Heart left ventricle (tissue), 16 donors: ENCODE measurements at regions of chr6 and their contacts with region 1.

Region 1: DNA sequence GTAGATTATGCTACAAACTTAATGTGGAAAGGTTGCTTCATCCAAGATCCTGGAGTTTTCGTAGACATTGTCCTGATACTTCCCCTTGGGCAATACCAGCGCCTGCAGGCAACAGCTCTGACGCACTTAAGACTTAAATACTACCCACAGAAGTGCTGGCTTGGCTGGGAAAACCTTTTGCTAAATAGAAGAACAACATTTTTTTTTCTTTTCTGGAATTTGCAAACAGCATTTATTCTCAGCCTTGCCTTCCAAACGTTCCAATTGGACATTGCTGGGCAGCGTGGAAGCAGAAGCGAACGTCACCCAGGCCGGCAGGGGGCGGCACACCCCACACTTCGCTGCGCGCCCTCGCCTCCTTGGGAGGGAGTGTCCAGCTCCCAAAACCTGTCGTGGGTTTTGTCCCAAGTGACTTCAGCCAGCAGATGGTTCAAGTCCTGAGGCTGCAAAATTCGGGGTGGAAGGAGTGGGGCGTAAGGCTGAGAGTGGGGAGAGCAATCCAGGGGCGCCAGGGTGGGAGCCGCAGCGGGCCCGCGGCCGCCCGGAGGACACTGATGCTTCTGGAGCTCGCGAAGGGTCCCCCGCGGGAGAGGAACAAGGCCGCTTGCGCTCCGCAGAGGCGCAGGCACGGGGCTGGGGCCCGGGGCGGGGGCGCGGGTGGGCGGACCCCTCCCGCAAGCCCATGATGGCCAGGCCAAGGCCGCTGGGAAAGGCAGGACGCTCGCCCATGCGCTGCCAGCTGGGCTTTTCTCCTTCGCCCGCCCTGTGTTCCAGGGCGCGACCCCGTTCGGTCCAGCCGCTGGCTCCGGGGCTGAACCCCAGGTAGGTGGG is 60.8 kb upstream of the MAP3K4 start:
- DNase-seq: peak; percentile 72 to 88 (median 78)
- ATAC-seq: peak; percentile 85 to 98 (median 93)
- H3K4me3 ChIP-seq: peak overlapping the region; percentile 25 to 70 (median 52)
- H3K27ac ChIP-seq: peak overlapping the region in 1 of 12 donors; percentile 22
- H3K4me1 ChIP-seq: peaks cover 0 to 9% (median 0%) of the 10 kb centered on the region in 12 donors
- H3K27me3 ChIP-seq: peaks cover 0 to 22% (median 0%) of the 10 kb centered on the region in 9 donors
- CTCF ChIP-seq: peak; percentile 82 to 95 (median 90)
- POLR2A ChIP-seq: no peak

Region 2: DNA sequence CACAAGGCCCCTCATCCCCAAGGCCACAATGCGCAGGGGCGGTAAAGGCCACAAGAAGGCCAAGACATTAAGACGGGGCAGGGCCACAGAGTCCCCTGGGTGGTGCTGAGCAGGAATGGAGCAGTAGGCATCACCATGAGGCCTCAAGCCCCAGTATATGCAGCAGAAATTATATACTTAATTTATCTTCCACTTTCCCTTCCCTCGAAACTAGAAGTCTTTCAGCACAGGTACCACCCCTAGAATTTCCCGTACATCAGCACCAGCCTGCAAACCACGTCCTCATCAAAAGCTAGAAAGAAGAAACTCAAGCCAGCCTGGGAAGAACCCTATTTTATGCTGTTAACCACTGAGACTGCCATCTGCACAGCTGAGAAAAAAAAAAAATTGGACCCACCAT is 139.3 kb before region 1 on chr6:
- intact Hi-C with region 1: no loop called
- DNase-seq: no peak
- ATAC-seq: no peak
- H3K4me3 ChIP-seq: no peak overlapping the region
- H3K27ac ChIP-seq: no peak overlapping the region
- H3K4me1 ChIP-seq: no peaks in the 10 kb centered on the region
- H3K27me3 ChIP-seq: no peaks in the 10 kb centered on the region
- CTCF ChIP-seq: no peak
- POLR2A ChIP-seq: no peak

Region 3: GRCh38 chr6:160945516-160946177 is 14.9 kb after region 1 on chr6:
- intact Hi-C with region 1: no loop called
- DNase-seq: no peak
- ATAC-seq: no peak
- H3K4me3 ChIP-seq: no peak overlapping the region
- H3K27ac ChIP-seq: no peak overlapping the region
- H3K4me1 ChIP-seq: peaks cover 0 to 18% (median 6%) of the 10 kb centered on the region in 12 donors
- H3K27me3 ChIP-seq: peaks cover 0 to 3% (median 0%) of the 10 kb centered on the region in 9 donors
- CTCF ChIP-seq: no peak
- POLR2A ChIP-seq: no peak

Region 4: DNA sequence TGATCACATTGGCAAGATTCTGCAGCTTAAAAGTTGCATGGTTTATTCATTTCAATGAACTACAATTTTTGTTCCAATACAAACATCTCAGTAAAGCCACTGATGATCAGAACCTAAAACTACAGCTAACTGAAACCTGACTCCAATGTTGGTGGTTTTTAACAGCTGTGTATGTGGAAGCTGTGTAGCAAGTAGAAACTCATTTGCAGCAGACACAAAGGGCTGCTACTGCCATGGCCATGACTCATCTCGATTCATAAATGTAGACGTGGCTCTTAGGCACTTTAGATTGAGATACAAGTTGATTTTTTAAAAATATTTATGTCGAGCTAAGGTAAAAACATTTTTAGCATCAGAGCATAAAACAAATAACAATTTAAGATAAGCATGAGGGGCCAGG is 41.3 kb after region 1 on chr6:
- intact Hi-C with region 1: loop called in 1 of 10 experiments (anchors 5 kb)
- DNase-seq: no peak
- ATAC-seq: no peak
- H3K4me3 ChIP-seq: no peak overlapping the region
- H3K27ac ChIP-seq: peak overlapping the region in 4 of 12 donors; percentile 33 to 83 (median 82)
- H3K4me1 ChIP-seq: peaks cover 0 to 38% (median 20%) of the 10 kb centered on the region in 12 donors
- H3K27me3 ChIP-seq: no peaks in the 10 kb centered on the region
- CTCF ChIP-seq: no peak
- POLR2A ChIP-seq: no peak

Region 5: GRCh38 chr6:160992061-160992979 is 61.6 kb after region 1 on chr6:
- intact Hi-C with region 1: loop called (anchors 1 to 5 kb)
- DNase-seq: peak; percentile 48 to 78 (median 50)
- ATAC-seq: peak in 3 of 4 donors; percentile 64 to 69 (median 66)
- H3K4me3 ChIP-seq: peak overlapping the region; percentile 79 to 98 (median 91)
- H3K27ac ChIP-seq: peak overlapping the region; percentile 93 to 99 (median 96)
- H3K4me1 ChIP-seq: peaks cover 0 to 38% (median 19%) of the 10 kb centered on the region in 12 donors
- H3K27me3 ChIP-seq: no peaks in the 10 kb centered on the region
- CTCF ChIP-seq: peak; percentile 31 to 75 (median 56)
- POLR2A ChIP-seq: no peak

Region 6: GRCh38 chr6:161066511-161066910 is 135.7 kb after region 1 on chr6:
- intact Hi-C with region 1: loop called in 3 of 10 experiments (anchors 2 to 10 kb)
- DNase-seq: no peak
- ATAC-seq: no peak
- H3K4me3 ChIP-seq: no peak overlapping the region
- H3K27ac ChIP-seq: no peak overlapping the region
- H3K4me1 ChIP-seq: peaks cover 0 to 30% (median 2%) of the 10 kb centered on the region in 12 donors
- H3K27me3 ChIP-seq: no peaks in the 10 kb centered on the region
- CTCF ChIP-seq: no peak
- POLR2A ChIP-seq: no peak

Region 7: DNA sequence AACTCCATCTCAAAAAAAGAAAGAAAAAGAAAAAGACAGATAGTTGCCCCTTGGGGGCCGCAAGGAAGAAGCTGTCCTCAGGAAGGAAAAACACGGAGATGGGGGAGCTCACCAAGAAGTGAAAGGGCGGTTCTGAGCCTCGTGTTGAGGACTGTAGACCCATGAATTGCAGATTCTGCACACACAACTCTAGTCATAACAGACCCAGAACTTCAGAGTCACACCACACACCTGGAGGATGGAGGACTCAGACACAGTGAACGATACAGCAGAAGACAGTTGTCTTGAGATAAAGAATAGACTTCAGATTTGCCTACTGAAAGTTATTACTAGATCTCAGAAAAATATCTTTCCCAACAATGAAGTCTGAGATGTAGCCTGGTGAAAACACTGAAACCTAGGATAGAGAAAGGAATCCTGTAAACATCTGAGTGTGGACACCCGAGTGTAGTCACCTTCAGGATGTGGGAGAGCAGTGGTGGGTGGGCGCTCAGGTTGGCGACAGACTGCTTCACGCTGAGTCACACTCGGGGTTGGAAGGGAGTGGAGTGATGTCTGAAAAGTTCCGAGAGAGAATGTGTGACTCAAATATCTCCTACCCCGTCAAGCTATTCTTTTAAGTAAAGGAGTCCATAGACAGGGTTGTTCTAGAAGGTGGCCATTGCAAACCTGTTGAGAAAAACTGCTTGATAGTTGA is 149.0 kb after region 1 on chr6:
- intact Hi-C with region 1: loop called in 3 of 10 experiments (anchors 10 kb)
- DNase-seq: peak in 1 of 5 donors; percentile 55
- ATAC-seq: peak in 2 of 4 donors; percentile 30 to 75
- H3K4me3 ChIP-seq: no peak overlapping the region
- H3K27ac ChIP-seq: no peak overlapping the region
- H3K4me1 ChIP-seq: peaks cover 0 to 16% (median 4%) of the 10 kb centered on the region in 12 donors
- H3K27me3 ChIP-seq: no peaks in the 10 kb centered on the region
- CTCF ChIP-seq: no peak
- POLR2A ChIP-seq: no peak